Prostate gland (tissue), 2 donors: ENCODE measurements at regions of chr6 and their contacts with region 1.

Region 1: DNA sequence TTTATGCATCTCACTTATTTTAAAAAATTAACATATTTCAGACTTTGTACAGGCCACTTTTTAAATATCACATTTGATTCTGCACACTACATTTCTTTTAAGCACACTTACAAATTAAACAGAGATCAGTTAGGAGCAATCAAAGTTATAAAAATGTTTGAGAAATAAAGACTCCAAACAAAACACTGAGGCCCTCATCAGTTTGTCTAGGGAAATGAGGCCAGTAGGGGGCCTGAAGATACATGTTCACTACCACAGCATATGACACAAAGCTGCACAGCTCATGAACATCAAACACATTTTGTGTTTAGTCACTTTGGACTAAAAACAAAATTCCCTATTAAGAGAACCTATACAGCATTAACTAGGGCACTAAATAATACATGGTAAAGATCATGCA is 180.5 kb downstream of the PDE7B start:
- DNase-seq: no peak
- H3K4me3 ChIP-seq: no peak overlapping the region
- H3K27ac ChIP-seq: no peak overlapping the region
- H3K4me1 ChIP-seq: no peaks in the 10 kb centered on the region
- H3K27me3 ChIP-seq: no peaks in the 10 kb centered on the region
- CTCF ChIP-seq: peak in 3 of 4 experiments; percentile 12 to 33 (median 31)
- POLR2A ChIP-seq: no peak

Region 2: GRCh38 chr6:135910790-135911618 is 121.0 kb before region 1 on chr6:
- intact Hi-C with region 1: no loop called
- DNase-seq: no peak
- H3K4me3 ChIP-seq: no peak overlapping the region
- H3K27ac ChIP-seq: no peak overlapping the region
- H3K4me1 ChIP-seq: no peaks in the 10 kb centered on the region
- H3K27me3 ChIP-seq: no peaks in the 10 kb centered on the region
- CTCF ChIP-seq: no peak
- POLR2A ChIP-seq: no peak

Region 3: DNA sequence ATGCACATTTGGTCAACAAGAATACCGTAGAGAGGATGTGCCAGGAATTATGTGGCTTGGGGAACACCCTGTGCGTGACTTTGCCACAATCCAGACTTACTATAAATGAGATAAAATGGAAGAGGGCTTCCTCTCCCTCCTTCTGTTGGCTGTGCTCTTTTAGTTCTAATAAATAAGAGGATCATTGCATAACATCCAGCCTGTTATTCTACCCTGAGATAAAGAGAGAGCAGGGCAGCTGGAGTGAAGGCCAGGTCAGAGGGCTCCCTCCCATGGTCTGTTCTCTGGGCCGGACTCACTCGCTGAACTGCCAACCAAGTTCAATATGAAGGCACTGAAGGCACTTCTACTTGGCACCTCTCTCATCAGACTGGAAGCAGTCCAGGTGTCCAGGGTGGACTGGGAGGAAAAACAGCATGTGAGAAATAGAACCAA is 126.4 kb after region 1 on chr6:
- intact Hi-C with region 1: loop called (anchors 10 kb)
- DNase-seq: no peak
- H3K4me3 ChIP-seq: no peak overlapping the region
- H3K27ac ChIP-seq: no peak overlapping the region
- H3K4me1 ChIP-seq: no peaks in the 10 kb centered on the region
- H3K27me3 ChIP-seq: no peaks in the 10 kb centered on the region
- CTCF ChIP-seq: no peak
- POLR2A ChIP-seq: no peak